Vagina (tissue), 2 donors: ENCODE measurements at regions of chr1 and their contacts with region 1.

Region 1: DNA sequence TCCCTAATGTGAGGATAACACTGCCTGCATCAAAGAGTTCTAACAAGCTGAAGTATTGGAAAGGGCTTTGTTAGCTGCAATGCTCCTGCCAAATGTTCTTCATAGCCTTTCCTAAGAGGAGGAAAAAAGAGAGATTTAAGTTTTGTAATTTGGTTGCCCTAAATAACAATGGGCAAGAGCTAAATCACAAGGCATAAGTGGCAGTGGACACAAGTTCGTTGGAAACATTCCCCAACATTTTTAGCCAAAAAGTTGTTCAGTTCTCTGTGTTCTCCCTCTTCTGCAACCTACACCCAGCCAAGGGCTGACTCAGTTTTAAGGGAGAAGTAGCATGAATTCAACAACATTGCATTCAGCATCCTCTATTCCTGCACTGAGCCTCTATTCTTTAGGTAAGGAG is 2.6 kb upstream of the UQCRHL start:
- DNase-seq: no peak
- H3K4me3 ChIP-seq: no peak overlapping the region
- H3K27ac ChIP-seq: peak overlapping the region; percentile 36
- H3K4me1 ChIP-seq: no peaks in the 10 kb centered on the region
- H3K27me3 ChIP-seq: no peaks in the 10 kb centered on the region
- CTCF ChIP-seq: no peak
- POLR2A ChIP-seq: no peak

Region 2: GRCh38 chr1:14259191-14259757 is 1550.8 kb before region 1 on chr1:
- intact Hi-C with region 1: no loop called
- DNase-seq: peak in 1 of 2 donors; percentile 98
- H3K4me3 ChIP-seq: no peak overlapping the region
- H3K27ac ChIP-seq: peak overlapping the region; percentile 45
- H3K4me1 ChIP-seq: peaks cover 22% of the 10 kb centered on the region
- H3K27me3 ChIP-seq: no peaks in the 10 kb centered on the region
- CTCF ChIP-seq: no peak
- POLR2A ChIP-seq: no peak

Region 3: GRCh38 chr1:15902882-15903281 is 92.8 kb after region 1 on chr1:
- intact Hi-C with region 1: loop called (anchors 10 kb)
- DNase-seq: no peak
- H3K4me3 ChIP-seq: no peak overlapping the region
- H3K27ac ChIP-seq: no peak overlapping the region
- H3K4me1 ChIP-seq: peaks cover 46% of the 10 kb centered on the region
- H3K27me3 ChIP-seq: no peaks in the 10 kb centered on the region
- CTCF ChIP-seq: no peak
- POLR2A ChIP-seq: no peak

Region 4: DNA sequence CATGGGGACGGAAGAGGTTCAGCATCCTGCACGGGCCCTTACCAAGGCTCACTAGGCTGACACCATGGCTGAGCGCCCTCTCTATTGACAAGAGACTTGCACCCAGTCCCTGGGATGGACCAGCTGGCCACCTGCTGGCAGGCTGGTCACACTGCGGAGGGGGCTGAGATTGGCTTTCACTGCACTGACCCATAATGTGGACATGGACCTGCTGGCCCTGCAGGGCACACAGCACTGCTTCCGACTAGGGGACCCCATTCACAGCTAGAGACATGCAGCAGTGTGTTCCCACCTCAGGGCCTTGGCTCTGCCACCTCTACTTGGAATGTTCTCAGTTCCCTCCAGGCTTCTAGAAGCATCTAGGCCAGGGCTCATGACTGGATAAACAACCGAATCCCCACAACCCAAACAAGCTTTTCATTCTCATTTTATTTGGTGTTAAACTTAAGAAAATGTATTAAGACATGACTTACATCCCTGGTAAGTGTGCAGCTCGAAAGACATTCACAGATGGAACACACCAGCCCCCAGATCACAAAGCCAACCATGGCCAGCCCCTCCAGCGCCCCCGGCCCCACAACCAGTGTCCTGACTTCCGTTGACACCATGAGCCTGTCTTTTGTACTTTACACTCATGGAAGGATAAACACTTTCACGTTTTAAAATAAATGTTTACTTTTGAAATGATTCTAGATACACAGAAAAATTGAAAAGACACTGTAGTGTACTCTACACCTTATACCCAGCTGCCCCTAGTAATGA is 184.7 kb after region 1 on chr1:
- intact Hi-C with region 1: loop called (anchors 5 kb)
- DNase-seq: no peak
- H3K4me3 ChIP-seq: no peak overlapping the region
- H3K27ac ChIP-seq: no peak overlapping the region
- H3K4me1 ChIP-seq: no peaks in the 10 kb centered on the region
- H3K27me3 ChIP-seq: no peaks in the 10 kb centered on the region
- CTCF ChIP-seq: peak; percentile 72 to 83 (median 77)
- POLR2A ChIP-seq: no peak